GM12878 (cell line): ENCODE measurements at regions of chr18 and their contacts with region 1.

Region 1: DNA sequence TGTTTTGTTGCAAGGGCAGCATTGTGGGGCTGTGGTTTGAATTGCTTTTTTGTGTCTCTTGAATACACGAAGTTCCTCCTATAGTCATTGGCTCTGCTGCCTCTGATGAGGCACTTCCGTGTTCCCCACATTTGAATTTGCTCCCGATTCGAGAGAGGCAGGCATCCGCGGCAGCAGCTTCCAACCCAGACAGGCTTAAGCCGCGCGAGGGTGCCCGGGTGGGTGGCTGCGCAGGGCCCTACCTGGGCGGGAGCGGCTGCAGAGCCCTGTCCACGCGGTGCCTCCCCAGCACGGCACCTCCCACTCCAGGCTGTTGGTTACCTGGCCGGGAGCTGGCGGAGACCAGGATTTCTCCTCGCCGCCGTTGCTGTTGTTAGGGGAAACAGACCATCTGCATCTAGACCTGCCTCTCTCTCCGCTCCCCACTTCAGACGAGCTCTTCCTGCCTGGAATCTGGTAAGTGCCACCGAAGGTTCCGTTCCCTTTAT is 151.3 kb downstream of the NEDD4L start:
- DNase-seq: no peak
- ATAC-seq: peak; percentile 83
- H3K4me3 ChIP-seq: peak overlapping the region; percentile 64
- H3K27ac ChIP-seq: no peak overlapping the region
- H3K4me1 ChIP-seq: no peaks in the 10 kb centered on the region
- H3K27me3 ChIP-seq: no peaks in the 10 kb centered on the region
- CTCF ChIP-seq: no peak
- EP300 ChIP-seq: no peak
- POLR2A ChIP-seq: no peak
- RAD21 ChIP-seq: no peak

Region 2: GRCh38 chr18:57635003-57635822 is 560.1 kb before region 1 on chr18:
- CTCF ChIA-PET with region 1: no interaction called
- POLR2A ChIA-PET with region 1: no interaction called
- RAD21 ChIA-PET with region 1: no interaction called
- SMC1A ChIA-PET with region 1: no interaction called
- in situ Hi-C with region 1: no loop called
- intact Hi-C with region 1: no loop called
- DNase-seq: no peak
- ATAC-seq: no peak
- H3K4me3 ChIP-seq: no peak overlapping the region
- H3K27ac ChIP-seq: no peak overlapping the region
- H3K4me1 ChIP-seq: peaks cover 6% of the 10 kb centered on the region
- H3K27me3 ChIP-seq: no peaks in the 10 kb centered on the region
- CTCF ChIP-seq: no peak
- EP300 ChIP-seq: no peak
- POLR2A ChIP-seq: no peak
- RAD21 ChIP-seq: no peak

Region 3: DNA sequence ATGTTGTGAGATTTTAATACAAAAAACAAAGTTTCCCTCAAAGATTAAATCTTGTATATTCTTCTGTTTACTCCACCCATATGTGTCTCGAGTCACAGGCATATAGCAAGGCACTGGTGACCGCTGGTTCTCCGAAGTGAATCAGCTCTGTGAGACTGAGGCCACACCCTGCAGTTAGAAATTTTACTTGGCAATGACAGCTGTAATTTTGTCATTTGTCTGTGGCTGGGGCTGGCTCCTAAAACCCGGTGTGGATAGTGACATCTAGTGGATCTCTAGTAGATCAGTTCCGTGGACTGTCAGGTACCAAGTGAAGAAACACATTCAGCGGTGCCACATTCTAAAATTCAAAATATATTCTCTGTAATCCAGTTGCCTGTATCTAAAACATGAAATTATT is 126.7 kb after region 1 on chr18:
- CTCF ChIA-PET with region 1: interaction called, 27 read pairs
- POLR2A ChIA-PET with region 1: no interaction called
- RAD21 ChIA-PET with region 1: interaction called, 10 read pairs
- SMC1A ChIA-PET with region 1: interaction called, 10 read pairs
- in situ Hi-C with region 1: no loop called
- intact Hi-C with region 1: no loop called
- DNase-seq: no peak
- ATAC-seq: peak; percentile 96
- H3K4me3 ChIP-seq: no peak overlapping the region
- H3K27ac ChIP-seq: no peak overlapping the region
- H3K4me1 ChIP-seq: peaks cover 7% of the 10 kb centered on the region
- H3K27me3 ChIP-seq: no peaks in the 10 kb centered on the region
- CTCF ChIP-seq: peak; percentile 45 to 77 (median 56); a peak in 4 of 6 replicates
- EP300 ChIP-seq: no peak
- POLR2A ChIP-seq: no peak
- RAD21 ChIP-seq: peak; percentile 77